HAP-1 (cell line): ENCODE measurements at regions of chrX and their contacts with region 1.

Region 1: GRCh38 chrX:20066968-20067708 is 49.6 kb downstream of the MAP7D2 start:
- DNase-seq: peak; percentile 62 to 68
- H3K4me3 ChIP-seq: no peak overlapping the region
- H3K4me1 ChIP-seq: no peaks in the 10 kb centered on the region
- H3K27me3 ChIP-seq: no peaks in the 10 kb centered on the region

Region 2: GRCh38 chrX:19382555-19383145 is 684.5 kb before region 1 on chrX:
- in situ Hi-C with region 1: loop called (anchors 25 kb)
- DNase-seq: peak; percentile 43 to 77
- H3K4me3 ChIP-seq: no peak overlapping the region
- H3K4me1 ChIP-seq: no peaks in the 10 kb centered on the region
- H3K27me3 ChIP-seq: no peaks in the 10 kb centered on the region

Region 3: DNA sequence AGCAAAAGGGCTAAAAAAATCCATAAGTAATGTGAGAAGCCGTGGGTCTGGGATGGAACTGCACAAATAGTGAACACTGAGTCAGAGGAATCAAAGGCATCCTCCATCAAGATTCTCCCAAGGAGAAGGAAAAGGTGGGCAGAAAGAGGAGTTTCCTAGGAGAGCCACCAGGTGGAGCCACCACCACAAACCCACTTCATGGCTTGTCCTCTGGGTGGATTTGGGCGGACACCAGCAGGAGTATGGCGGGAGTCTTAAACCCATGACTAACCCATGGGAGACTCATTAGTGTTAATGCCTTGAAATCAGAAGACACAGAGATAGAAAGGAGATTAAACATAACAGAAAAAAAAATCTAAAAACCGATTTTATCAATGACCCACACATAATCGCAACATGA is 327.5 kb before region 1 on chrX:
- in situ Hi-C with region 1: loop called (anchors 25 kb)
- DNase-seq: peak; percentile 78 to 87
- H3K4me3 ChIP-seq: no peak overlapping the region
- H3K4me1 ChIP-seq: no peaks in the 10 kb centered on the region; the same call in 1 of the 2 replicates
- H3K27me3 ChIP-seq: no peaks in the 10 kb centered on the region

Region 4: DNA sequence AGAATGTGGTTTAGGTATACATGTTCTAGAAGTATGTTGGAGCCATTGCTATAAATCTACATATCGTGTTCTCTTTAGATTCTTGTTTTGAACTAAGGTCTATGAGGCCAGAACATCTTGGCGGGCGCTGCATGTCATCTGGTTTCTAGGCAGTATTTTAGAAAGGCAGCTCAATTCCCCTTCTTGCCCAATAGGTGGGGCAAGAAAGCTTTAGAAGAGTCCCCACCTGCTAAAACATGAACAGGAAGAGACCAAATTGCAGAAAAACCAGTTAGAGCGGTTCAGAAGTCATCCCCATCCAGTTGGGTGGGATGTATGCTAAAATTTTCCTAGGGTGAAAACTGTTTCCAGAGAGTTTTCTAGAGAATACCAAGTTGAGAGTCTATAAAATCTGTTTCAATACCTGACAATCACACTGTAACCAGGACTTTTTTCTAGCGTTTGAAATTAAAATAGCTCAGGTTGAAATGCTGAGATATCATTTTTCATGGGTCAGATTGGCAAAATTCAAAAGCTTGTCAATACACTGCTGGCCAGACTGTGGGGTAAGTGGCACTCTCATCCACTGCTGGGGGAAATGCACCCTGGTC is 162.3 kb before region 1 on chrX:
- in situ Hi-C with region 1: loop called (anchors 5 kb)
- DNase-seq: peak; percentile 33 to 66
- H3K4me3 ChIP-seq: no peak overlapping the region
- H3K4me1 ChIP-seq: no peaks in the 10 kb centered on the region
- H3K27me3 ChIP-seq: no peaks in the 10 kb centered on the region

Region 5: DNA sequence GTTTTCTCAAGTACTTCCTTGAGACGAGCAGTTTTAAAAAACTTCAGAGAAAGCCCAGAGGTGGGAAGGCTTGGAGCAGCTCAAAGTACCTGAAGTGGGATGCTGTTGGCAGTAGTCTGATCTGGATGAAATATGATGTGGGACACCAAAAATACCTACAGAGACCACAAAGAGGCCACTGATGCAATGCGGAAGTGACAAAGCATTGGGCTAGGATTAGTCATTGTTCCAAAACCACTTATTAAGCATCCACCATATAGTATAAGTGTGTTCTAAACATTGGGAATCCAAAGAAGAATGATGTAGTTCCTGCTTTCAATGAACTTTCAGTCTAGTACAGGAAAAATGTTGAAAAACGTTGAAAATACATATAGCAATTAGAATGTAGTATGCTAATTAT is 921.0 kb after region 1 on chrX:
- in situ Hi-C with region 1: no loop called
- DNase-seq: no peak
- H3K4me3 ChIP-seq: no peak overlapping the region
- H3K4me1 ChIP-seq: peaks cover 7% of the 10 kb centered on the region; the same call in 1 of the 2 replicates
- H3K27me3 ChIP-seq: no peaks in the 10 kb centered on the region